Activated CD8-positive, alpha-beta T cell treated with anti-CD3 and anti-CD28 coated beads for 36 hours (primary cell): ENCODE measurements at regions of chr5 and their contacts with region 1.

Region 1: GRCh38 chr5:159133041-159133741 is 33.5 kb upstream of the EBF1 start:
- DNase-seq: no peak
- ATAC-seq: peak; percentile 60
- H3K4me3 Mint-ChIP-seq: no peak overlapping the region
- H3K27ac Mint-ChIP-seq: no peak overlapping the region
- H3K4me1 Mint-ChIP-seq: no peaks in the 10 kb centered on the region
- H3K27me3 Mint-ChIP-seq: peaks cover 1% of the 10 kb centered on the region
- CTCF ChIP-seq: peak; percentile 82

Region 2: DNA sequence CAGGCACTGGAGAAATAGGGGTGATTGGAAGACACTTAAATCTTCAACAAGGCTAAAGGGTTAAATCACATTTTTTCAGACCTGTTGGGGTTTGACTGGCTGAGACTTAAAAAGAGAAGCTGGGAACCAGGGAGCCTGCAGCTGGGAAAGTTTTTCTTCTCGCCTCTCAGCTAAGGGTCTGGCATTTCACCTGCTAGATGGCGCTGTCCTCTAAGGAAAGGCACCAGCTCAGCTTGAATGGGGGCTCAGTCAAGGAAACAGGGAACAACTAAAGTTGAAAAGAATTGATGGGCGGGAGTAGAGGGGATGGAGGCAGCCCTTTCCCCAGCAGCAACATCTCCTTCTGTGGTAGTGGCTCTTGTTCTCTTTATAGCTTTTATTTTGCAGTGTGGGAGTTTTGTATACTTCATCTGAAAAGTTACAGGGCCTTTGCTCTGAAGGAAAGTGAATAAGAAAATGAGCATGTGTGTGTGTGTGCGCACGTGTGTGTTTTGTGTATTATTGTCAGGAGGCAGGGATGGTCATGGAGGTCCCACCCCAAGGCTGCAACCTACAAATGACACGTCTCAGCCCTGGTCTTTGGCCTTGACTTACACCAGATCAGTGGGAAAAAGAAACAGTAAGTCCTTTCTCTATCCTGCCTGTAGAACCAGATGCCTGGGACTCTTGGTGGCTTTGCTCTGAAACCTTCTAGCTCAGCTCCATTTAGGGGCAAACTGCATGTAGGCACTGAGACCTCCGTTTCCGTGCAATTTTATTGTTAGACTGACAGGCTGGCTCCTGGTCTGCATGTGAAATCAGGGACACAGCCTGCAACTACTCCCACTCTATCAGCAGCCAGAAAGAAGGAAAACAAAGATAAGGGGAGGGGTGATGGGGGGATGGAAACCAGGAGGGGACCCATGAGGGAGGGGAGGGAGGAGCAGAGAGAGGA is 958.0 kb before region 1 on chr5:
- CTCF ChIA-PET with region 1: interaction called, 18 read pairs
- POLR2A ChIA-PET with region 1: no interaction called
- intact Hi-C with region 1: loop called (anchors 10 kb)
- DNase-seq: peak; percentile 72
- ATAC-seq: peak; percentile 42
- H3K4me3 Mint-ChIP-seq: no peak overlapping the region
- H3K27ac Mint-ChIP-seq: no peak overlapping the region
- H3K4me1 Mint-ChIP-seq: no peaks in the 10 kb centered on the region
- H3K27me3 Mint-ChIP-seq: no peaks in the 10 kb centered on the region
- CTCF ChIP-seq: peak; percentile 76

Region 3: DNA sequence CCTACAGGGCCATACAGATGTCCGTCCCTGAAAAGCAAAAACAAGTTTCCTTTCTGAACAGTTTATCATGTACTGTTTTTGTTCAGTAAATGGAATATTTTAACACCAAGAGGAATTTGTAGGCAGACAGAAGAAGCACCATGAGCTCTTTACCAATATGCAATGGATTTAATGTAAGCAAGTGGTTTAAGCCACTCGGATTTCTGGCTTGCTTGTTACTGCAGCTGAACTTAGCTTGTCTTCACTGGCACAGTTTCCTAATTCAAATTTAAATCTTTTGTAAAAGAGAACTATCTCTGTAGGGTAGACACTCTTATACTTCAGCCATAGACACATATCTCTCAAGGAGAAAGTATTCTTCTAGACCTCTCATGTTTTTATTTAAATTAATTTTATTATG is 20.8 kb before region 1 on chr5:
- CTCF ChIA-PET with region 1: interaction called, 28 read pairs
- POLR2A ChIA-PET with region 1: no interaction called
- intact Hi-C with region 1: no loop called
- DNase-seq: no peak
- ATAC-seq: no peak
- H3K4me3 Mint-ChIP-seq: no peak overlapping the region
- H3K27ac Mint-ChIP-seq: no peak overlapping the region
- H3K4me1 Mint-ChIP-seq: peaks cover 7% of the 10 kb centered on the region
- H3K27me3 Mint-ChIP-seq: peaks cover 11% of the 10 kb centered on the region
- CTCF ChIP-seq: no peak

Region 4: DNA sequence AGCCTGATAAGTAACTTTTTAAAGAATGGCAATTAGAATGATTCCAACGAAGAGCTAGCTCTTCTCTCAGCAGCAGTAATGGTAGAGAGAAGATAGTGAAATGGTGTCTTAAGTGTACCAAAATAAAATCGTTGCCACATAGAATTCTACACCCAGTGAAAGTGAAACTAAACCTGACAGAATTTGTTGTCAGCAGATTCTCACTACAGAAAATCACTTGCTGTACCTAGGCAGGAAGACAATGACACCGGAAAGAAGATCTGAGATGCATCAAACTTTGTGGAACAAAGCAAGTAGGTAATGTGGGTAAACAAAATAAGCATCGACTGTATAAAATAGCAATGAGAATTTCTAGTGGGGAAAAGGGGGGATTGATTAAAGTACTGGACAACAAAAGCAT is 12.7 kb before region 1 on chr5:
- CTCF ChIA-PET with region 1: interaction called, 27 read pairs
- POLR2A ChIA-PET with region 1: no interaction called
- intact Hi-C with region 1: no loop called
- DNase-seq: no peak
- ATAC-seq: peak; percentile 78
- H3K4me3 Mint-ChIP-seq: peak overlapping the region; percentile 51
- H3K27ac Mint-ChIP-seq: peak overlapping the region; percentile 84
- H3K4me1 Mint-ChIP-seq: peaks cover 26% of the 10 kb centered on the region
- H3K27me3 Mint-ChIP-seq: no peaks in the 10 kb centered on the region
- CTCF ChIP-seq: no peak

Region 5: GRCh38 chr5:159331093-159331973 is 198.1 kb after region 1 on chr5:
- CTCF ChIA-PET with region 1: no interaction called
- POLR2A ChIA-PET with region 1: no interaction called
- intact Hi-C with region 1: no loop called
- DNase-seq: peak; percentile 82
- ATAC-seq: peak; percentile 93
- H3K4me3 Mint-ChIP-seq: peak overlapping the region; percentile 56
- H3K27ac Mint-ChIP-seq: no peak overlapping the region
- H3K4me1 Mint-ChIP-seq: peaks cover 9% of the 10 kb centered on the region
- H3K27me3 Mint-ChIP-seq: peaks cover 9% of the 10 kb centered on the region
- CTCF ChIP-seq: peak; percentile 86